OCI-LY7 (cell line): ENCODE measurements at regions of chr16 and their contacts with region 1.

Region 1: GRCh38 chr16:53356478-53357200 is 77.6 kb upstream of the RBL2 start:
- DNase-seq: peak; percentile 17
- H3K4me3 ChIP-seq: no peak overlapping the region
- H3K27ac ChIP-seq: no peak overlapping the region
- H3K4me1 ChIP-seq: peaks cover 5% of the 10 kb centered on the region
- CTCF ChIP-seq: peak; percentile 63

Region 2: GRCh38 chr16:53341792-53342191 is 14.8 kb before region 1 on chr16:
- CTCF ChIA-PET with region 1: no interaction called
- POLR2A ChIA-PET with region 1: no interaction called
- intact Hi-C with region 1: no loop called
- DNase-seq: no peak
- H3K4me3 ChIP-seq: no peak overlapping the region
- H3K27ac ChIP-seq: no peak overlapping the region
- H3K4me1 ChIP-seq: no peaks in the 10 kb centered on the region
- CTCF ChIP-seq: no peak

Region 3: DNA sequence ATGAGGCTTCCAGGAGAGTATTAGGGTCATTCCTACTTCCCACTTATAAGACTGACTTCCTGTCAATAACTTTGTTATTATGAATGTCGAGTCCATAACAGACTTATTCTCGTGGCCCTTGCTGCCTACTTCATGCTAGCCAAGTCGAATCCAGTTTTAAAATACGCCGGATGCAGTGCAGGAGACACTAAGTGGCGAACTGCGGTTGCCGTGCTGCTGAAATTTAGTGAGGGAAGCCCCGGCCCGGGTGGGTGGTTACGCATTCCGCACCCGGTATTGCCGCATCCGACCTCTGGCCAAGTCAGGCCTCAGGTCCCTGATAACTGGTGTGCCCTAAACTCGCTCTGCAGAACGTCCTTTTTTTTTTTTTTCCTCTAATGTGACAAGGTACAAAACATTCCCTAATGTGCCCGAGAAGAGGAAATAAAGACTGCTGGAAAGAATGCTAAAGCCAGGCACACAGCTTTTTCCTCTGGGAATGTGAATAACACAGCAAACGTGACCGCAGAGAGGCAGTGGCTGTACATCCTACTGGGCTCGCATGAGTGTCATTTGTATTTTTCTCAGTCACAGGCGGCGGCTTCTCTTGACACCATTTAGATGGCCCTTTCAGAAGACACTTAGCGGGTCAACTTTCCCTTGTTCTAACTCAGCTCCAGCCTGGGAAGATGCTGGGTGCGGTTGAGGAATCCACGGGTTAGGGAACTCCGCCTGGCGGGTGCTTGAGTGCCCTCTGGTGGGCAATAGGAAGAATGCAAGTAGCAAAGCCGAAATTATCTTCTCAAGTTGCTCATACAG is 153.5 kb after region 1 on chr16:
- CTCF ChIA-PET with region 1: no interaction called
- POLR2A ChIA-PET with region 1: no interaction called
- intact Hi-C with region 1: loop called (anchors 10 kb)
- DNase-seq: peak; percentile 60
- H3K4me3 ChIP-seq: no peak overlapping the region
- H3K27ac ChIP-seq: no peak overlapping the region
- H3K4me1 ChIP-seq: no peaks in the 10 kb centered on the region
- CTCF ChIP-seq: peak; percentile 98